ENCODE measurements at regions of chr2 and their contacts with region 1.

Region 1: GRCh38 chr2:238256594-238257104 is 16.8 kb upstream of the HES6 start:
- DNase-seq: peak; percentile 91
- ATAC-seq: peak; percentile 86
- H3K4me3 ChIP-seq: no peak overlapping the region
- H3K27ac ChIP-seq: no peak overlapping the region
- H3K4me1 ChIP-seq: peaks cover 26% of the 10 kb centered on the region
- H3K27me3 ChIP-seq: no peaks in the 10 kb centered on the region
- CTCF ChIP-seq: peak; percentile 95
- EP300 ChIP-seq: peak; percentile 25 to 27; a peak in 1 of 4 replicates
- POLR2A ChIP-seq: no peak
- RAD21 ChIP-seq: peak; percentile 100

Region 2: GRCh38 chr2:238160206-238161109 is 96.2 kb before region 1 on chr2:
- CTCF ChIA-PET with region 1: interaction called, 7 read pairs
- POLR2A ChIA-PET with region 1: no interaction called
- in situ Hi-C with region 1: no loop called
- intact Hi-C with region 1: loop called (anchors 2 kb)
- DNase-seq: peak; percentile 31
- ATAC-seq: peak; percentile 54
- H3K4me3 ChIP-seq: peak overlapping the region in 2 of 3 experiments; percentile 25 to 60; a peak in 3 of 6 replicates
- H3K27ac ChIP-seq: no peak overlapping the region
- H3K4me1 ChIP-seq: peaks cover 24% of the 10 kb centered on the region
- H3K27me3 ChIP-seq: peaks cover 38 to 80% of the 10 kb centered on the region in 2 experiments
- CTCF ChIP-seq: peak; percentile 87
- EP300 ChIP-seq: no peak
- POLR2A ChIP-seq: no peak
- RAD21 ChIP-seq: 0 out of 2 replicates have a peak, but pooled peaks have one; percentile 33

Region 3: DNA sequence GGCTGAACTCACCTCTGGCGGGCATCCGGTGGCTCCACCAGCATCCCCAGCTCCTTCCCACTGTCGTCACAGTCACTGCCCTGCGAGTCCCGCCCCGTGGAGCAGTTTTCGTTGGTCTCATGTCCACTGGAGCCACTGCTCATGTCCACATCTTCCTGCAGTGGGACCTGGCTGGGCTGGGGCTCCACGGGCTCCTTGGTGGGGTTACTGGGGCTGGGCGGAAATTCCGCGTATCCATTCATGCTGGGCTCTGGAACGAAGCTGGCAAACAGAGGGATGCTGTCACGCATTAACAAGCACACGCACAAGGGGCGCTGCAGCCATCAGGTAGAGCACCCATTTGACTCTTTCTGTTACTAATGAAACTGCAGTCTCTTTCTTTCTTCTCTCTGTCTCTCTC is 21.0 kb after region 1 on chr2:
- CTCF ChIA-PET with region 1: no interaction called
- POLR2A ChIA-PET with region 1: no interaction called
- in situ Hi-C with region 1: no loop called
- intact Hi-C with region 1: no loop called
- DNase-seq: no peak
- ATAC-seq: peak; percentile 37
- H3K4me3 ChIP-seq: no peak overlapping the region
- H3K27ac ChIP-seq: no peak overlapping the region
- H3K4me1 ChIP-seq: peaks cover 46% of the 10 kb centered on the region
- H3K27me3 ChIP-seq: no peaks in the 10 kb centered on the region
- CTCF ChIP-seq: no peak
- EP300 ChIP-seq: no peak
- POLR2A ChIP-seq: no peak
- RAD21 ChIP-seq: no peak

Region 4: DNA sequence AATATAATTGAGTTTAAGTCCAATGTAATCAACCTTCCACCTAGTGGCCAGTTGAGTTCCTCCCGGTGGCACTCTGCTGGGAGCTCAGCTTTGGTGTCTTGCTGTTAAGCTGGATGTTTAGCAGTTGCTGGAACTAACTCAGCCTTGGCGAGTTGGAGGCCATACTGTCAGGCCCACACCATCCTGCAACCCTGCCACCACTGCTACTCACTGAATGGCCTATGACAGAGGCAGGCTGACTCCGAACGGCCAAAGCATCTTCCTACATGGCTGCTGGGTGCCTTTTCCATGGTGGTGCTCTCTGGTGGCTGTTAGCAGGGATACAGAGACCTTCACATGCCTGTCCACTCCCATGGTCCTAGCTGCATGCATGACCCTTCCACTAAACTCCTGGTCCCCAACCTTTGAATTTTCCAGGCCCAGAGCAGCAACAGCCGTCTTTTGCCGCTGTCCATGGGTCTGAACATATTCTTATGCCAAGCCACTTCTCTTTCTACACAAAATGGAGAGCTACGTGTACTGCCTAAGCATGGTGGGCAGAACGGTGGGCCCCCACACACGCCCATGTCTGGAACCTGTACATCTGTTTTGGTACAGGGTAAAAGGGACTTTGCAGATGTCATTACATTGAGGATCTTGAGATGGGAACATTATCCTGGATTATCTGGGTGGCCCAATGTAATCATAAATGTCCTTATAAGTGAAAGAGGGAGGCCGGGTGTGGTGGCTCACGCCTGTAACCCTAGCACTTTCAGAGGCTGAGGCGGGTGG is 48.6 kb after region 1 on chr2:
- CTCF ChIA-PET with region 1: interaction called, 23 read pairs
- POLR2A ChIA-PET with region 1: no interaction called
- in situ Hi-C with region 1: no loop called
- intact Hi-C with region 1: loop called (anchors 1 kb)
- DNase-seq: peak; percentile 51
- ATAC-seq: peak; percentile 83
- H3K4me3 ChIP-seq: peak overlapping the region in 1 of 3 experiments; percentile 22; a peak in 1 of 6 replicates
- H3K27ac ChIP-seq: no peak overlapping the region
- H3K4me1 ChIP-seq: peaks cover 33% of the 10 kb centered on the region
- H3K27me3 ChIP-seq: peaks cover 1 to 8% of the 10 kb centered on the region in 2 experiments; a peak in 3 of 5 replicates
- CTCF ChIP-seq: peak; percentile 64
- EP300 ChIP-seq: no peak
- POLR2A ChIP-seq: no peak
- RAD21 ChIP-seq: peak; percentile 53

Region 5: DNA sequence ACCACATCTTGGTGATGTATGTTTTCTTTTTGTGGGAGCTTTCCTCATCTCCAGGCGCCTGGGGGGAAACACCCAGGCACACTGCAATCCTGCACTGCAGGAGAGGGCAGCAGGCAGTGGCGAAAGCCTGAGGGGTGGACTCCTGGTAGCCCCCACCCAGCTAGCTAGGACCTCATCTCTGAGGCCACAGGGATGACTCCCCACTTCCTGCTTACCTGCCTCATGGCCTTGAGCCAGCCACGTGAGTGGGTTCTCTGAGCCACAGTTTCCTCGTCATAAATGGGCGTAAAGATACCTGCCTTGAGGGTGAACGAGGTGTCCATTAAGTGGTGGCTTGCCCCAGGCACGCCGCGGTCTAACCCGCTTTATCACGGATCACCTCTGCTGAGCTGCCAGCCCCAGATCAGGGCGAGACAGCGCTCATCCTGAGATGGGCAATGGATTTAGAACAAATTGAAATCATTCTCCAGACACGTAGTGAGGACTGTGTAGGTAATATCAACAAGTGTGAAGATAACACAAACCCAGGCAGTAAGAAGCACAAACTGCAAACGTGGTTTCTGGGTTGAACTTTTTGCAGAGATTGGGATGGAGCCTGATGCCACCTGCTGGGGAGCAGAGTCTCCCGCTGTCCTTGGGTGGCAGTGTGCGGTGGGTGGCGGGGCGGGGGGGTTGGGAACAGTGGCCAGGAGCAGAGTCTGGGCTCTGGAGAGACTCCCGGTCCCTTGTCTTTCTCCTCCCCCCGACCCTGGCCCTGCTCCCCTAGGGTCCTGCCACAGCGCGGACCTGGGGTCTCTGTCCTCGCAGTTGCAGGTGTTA is 83.0 kb after region 1 on chr2:
- CTCF ChIA-PET with region 1: interaction called, 24 read pairs
- POLR2A ChIA-PET with region 1: no interaction called
- in situ Hi-C with region 1: no loop called
- intact Hi-C with region 1: no loop called
- DNase-seq: peak; percentile 28
- ATAC-seq: peak; percentile 84
- H3K4me3 ChIP-seq: no peak overlapping the region
- H3K27ac ChIP-seq: no peak overlapping the region
- H3K4me1 ChIP-seq: no peaks in the 10 kb centered on the region
- H3K27me3 ChIP-seq: no peaks in the 10 kb centered on the region
- CTCF ChIP-seq: peak; percentile 56
- EP300 ChIP-seq: no peak
- POLR2A ChIP-seq: no peak
- RAD21 ChIP-seq: no peak